A673 (cell line): ENCODE measurements at regions of chr3 and their contacts with region 1.

Region 1: GRCh38 chr3:178900029-178900646 is 171.5 kb downstream of the ZMAT3 start:
- DNase-seq: no peak
- H3K4me3 ChIP-seq: no peak overlapping the region
- H3K27ac ChIP-seq: no peak overlapping the region
- H3K4me1 ChIP-seq: no peaks in the 10 kb centered on the region
- H3K27me3 ChIP-seq: no peaks in the 10 kb centered on the region
- CTCF ChIP-seq: no peak

Region 2: GRCh38 chr3:178868681-178869080 is 31.5 kb before region 1 on chr3:
- CTCF ChIA-PET with region 1: no interaction called
- POLR2A ChIA-PET with region 1: no interaction called
- intact Hi-C with region 1: loop called (anchors 1 kb)
- DNase-seq: no peak
- H3K4me3 ChIP-seq: no peak overlapping the region
- H3K27ac ChIP-seq: no peak overlapping the region
- H3K4me1 ChIP-seq: no peaks in the 10 kb centered on the region
- H3K27me3 ChIP-seq: no peaks in the 10 kb centered on the region
- CTCF ChIP-seq: no peak